ENCODE measurements at regions of chr10 and their contacts with region 1.

Region 1: GRCh38 chr10:127853868-127854768 is 38.6 kb downstream of the CLRN3 start:
- DNase-seq: peak; percentile 53
- H3K4me3 ChIP-seq: no peak overlapping the region
- H3K27ac ChIP-seq: no peak overlapping the region
- H3K4me1 ChIP-seq: no peaks in the 10 kb centered on the region
- H3K27me3 ChIP-seq: peaks cover 2% of the 10 kb centered on the region
- CTCF ChIP-seq: peak; percentile 77 to 89

Region 2: GRCh38 chr10:127243490-127244272 is 610.4 kb before region 1 on chr10:
- CTCF ChIA-PET with region 1: no interaction called
- dilution Hi-C with region 1: no loop called
- in situ Hi-C with region 1: no loop called
- intact Hi-C with region 1: loop called (anchors 5 kb)
- DNase-seq: peak; percentile 11
- H3K4me3 ChIP-seq: no peak overlapping the region
- H3K27ac ChIP-seq: no peak overlapping the region
- H3K4me1 ChIP-seq: no peaks in the 10 kb centered on the region
- H3K27me3 ChIP-seq: no peaks in the 10 kb centered on the region
- CTCF ChIP-seq: peak; percentile 74 to 77

Region 3: DNA sequence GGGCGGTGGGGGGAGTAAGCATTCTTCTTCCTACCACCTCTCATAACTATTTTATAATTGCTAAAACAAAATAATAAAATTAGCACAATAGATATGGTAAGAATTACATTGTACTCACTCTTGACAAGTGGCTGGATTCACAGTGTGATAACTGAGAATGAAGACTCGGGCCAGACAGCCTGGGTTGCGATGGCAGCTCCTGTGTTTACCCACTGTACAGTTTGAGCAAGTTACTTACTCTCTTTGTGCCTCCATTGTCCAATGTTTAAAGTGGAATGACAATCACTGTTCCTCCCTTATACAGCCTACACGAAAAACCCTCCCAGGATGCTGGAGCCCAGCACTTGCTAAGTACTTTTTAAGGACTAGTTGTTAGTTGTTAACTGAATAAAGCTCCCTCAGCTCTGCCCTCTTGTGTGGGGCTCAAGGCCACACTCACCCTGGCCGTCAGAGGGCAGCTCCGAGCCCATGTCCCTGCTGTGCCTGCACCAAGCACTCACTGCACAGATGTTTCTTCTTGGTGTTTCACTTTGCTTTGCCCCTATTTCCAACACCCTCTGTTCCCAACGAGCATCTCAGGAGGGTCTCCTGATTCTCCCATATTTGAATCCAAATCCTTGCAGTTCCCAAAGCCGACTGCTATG is 361.4 kb before region 1 on chr10:
- CTCF ChIA-PET with region 1: no interaction called
- dilution Hi-C with region 1: no loop called
- in situ Hi-C with region 1: no loop called
- intact Hi-C with region 1: loop called (anchors 1 kb)
- DNase-seq: no peak
- H3K4me3 ChIP-seq: no peak overlapping the region
- H3K27ac ChIP-seq: no peak overlapping the region
- H3K4me1 ChIP-seq: no peaks in the 10 kb centered on the region
- H3K27me3 ChIP-seq: peaks cover 2% of the 10 kb centered on the region
- CTCF ChIP-seq: peak in 1 of 2 donors; percentile 40

Region 4: GRCh38 chr10:127563718-127564553 is 290.2 kb before region 1 on chr10:
- CTCF ChIA-PET with region 1: no interaction called
- dilution Hi-C with region 1: no loop called
- in situ Hi-C with region 1: no loop called
- intact Hi-C with region 1: loop called (anchors 5 kb)
- DNase-seq: peak; percentile 12
- H3K4me3 ChIP-seq: no peak overlapping the region
- H3K27ac ChIP-seq: no peak overlapping the region
- H3K4me1 ChIP-seq: no peaks in the 10 kb centered on the region
- H3K27me3 ChIP-seq: peaks cover 4% of the 10 kb centered on the region
- CTCF ChIP-seq: peak; percentile 69 to 70

Region 5: DNA sequence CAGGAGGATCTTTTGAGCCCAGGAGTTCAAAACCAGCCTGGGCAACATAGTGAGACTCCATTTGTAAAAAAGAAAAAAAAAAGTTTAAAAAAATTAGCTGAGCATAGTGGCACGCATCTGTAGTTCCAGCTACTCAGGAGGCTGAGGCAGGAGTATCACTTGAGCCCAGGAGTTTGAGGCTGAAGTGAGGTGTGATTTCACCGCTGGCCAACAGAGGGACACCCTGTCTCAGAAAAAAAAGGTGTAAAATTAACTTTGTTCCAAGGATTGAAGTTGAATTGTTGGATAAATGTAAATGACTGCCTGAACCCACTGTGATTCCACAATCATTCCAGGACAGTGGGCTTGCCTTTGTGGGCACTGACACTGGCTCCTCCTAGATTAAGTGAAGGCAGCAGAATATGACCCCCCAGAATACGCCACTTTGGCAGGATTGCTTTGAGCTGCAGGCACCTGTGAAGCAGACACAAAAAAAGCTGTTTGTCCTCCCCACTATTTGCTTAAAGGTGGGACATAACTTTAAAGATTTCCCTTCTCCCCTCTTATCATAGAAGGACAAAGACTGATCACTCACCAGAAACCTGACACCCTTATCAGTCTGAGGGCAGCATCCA is 174.4 kb before region 1 on chr10:
- CTCF ChIA-PET with region 1: no interaction called
- dilution Hi-C with region 1: no loop called
- in situ Hi-C with region 1: no loop called
- intact Hi-C with region 1: loop called (anchors 1 kb)
- DNase-seq: no peak
- H3K4me3 ChIP-seq: no peak overlapping the region
- H3K27ac ChIP-seq: no peak overlapping the region
- H3K4me1 ChIP-seq: no peaks in the 10 kb centered on the region
- H3K27me3 ChIP-seq: no peaks in the 10 kb centered on the region
- CTCF ChIP-seq: peak; percentile 26 to 39

Region 6: DNA sequence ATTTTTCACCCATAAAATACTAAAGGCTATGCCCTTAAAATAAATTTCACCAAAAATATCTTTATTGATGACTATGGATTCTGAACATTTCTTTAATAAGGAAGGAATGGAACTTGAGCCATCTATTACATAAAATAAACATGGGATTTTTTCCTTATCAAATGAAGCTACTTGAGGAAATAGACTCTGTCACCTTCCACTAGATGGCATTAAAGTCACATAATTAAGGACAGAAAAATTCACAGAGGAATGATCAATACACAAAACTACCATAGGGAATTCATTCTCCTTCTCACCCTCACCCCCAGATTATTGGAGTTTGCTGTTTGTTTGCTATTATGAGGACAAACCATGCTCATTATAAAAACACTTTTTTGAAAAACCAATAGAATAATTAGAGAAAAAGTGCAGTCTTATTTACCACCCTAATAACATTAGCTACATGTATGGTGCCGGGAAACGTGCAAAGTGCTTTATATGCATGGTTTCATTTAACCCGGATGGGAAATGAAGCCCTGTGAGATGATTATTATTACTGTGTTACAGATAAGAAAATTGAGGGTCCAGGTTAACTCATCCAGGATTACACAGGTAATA is 138.2 kb before region 1 on chr10:
- CTCF ChIA-PET with region 1: interaction called, 17 read pairs
- dilution Hi-C with region 1: no loop called
- in situ Hi-C with region 1: loop called (anchors 10 kb)
- intact Hi-C with region 1: loop called (anchors 1 kb)
- DNase-seq: no peak
- H3K4me3 ChIP-seq: no peak overlapping the region
- H3K27ac ChIP-seq: no peak overlapping the region
- H3K4me1 ChIP-seq: no peaks in the 10 kb centered on the region
- H3K27me3 ChIP-seq: no peaks in the 10 kb centered on the region
- CTCF ChIP-seq: peak; percentile 22 to 45

Region 7: DNA sequence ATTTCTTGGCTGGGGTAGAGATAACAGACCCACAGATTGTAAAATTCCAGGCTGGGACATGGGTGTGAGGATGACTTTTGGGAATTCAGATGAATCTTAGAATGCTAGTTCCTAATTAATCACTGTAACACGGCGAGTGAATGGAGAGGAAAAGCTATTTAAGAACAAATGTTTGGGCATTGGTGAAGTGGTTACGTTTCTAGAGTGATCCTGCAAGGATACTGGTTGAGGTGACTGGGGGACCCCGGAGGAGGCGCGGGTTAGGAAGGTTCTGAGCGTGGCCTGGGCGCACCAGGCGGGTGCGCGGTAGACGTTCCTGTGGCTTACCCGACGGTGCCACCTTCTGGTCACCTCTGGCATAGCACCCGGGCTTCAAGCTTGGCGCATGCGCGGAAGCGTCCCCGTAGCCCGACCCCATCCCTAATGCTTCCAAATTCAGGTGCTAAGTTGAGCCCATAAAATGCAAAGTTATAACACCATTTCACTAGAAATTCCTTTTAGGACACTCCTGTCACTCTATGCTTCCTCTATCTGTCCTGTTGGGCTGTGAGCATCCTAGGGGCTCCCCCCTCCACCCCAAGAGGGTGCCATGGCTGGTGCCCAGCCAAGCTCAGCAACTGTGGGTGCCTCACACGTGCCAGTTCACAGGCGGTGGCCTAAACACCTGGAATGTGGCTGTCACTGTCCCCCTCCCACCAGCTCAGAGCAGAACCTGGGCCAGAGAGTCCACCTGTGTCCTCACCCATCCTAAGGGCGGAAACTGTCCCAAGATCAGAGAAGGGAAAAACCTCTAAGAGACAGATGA is 157.3 kb after region 1 on chr10:
- CTCF ChIA-PET with region 1: no interaction called
- dilution Hi-C with region 1: no loop called
- in situ Hi-C with region 1: no loop called
- intact Hi-C with region 1: loop called (anchors 1 kb)
- DNase-seq: peak; percentile 40
- H3K4me3 ChIP-seq: no peak overlapping the region
- H3K27ac ChIP-seq: no peak overlapping the region
- H3K4me1 ChIP-seq: no peaks in the 10 kb centered on the region
- H3K27me3 ChIP-seq: no peaks in the 10 kb centered on the region
- CTCF ChIP-seq: peak; percentile 95 to 100

Measured in mammary epithelial cell (primary cell).